Testis (tissue), 5 donors: ENCODE measurements at regions of chr20 and their contacts with region 1.

Region 1: DNA sequence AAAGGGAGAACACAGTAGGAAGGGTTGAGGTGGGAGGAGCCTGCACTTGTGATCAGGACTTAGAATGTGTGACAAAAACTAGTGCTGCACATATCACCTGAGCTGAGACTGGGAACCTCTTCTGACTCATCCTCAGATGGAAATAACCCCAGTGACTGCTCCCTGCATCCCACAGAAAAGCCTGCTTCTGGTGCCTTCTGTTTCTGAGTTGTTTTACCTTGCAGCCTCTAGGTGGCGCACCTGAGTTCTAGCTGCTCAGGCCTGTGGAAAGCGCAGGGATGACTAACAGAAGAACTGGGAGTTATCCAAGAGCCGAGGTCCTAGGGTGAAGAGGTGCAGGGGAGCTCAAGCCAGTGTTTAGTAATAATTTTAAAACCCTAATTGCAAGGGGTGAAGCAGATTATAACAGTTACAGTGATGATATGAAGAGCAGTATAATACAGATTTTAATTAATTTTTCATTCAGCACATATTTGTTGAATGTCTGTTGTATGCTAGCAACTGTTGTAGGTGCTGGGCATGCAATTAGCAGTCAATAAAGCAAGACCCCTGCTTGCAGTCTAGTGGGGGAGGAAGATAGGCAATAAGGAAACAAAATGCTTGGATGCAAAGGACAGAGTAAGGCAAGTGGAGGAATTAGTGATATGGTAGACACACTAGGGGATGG is 302.5 kb downstream of the DHX35 start:
- DNase-seq: peak; percentile 75
- H3K4me3 ChIP-seq: no peak overlapping the region
- H3K27ac ChIP-seq: no peak overlapping the region
- H3K4me1 ChIP-seq: no peaks in the 10 kb centered on the region
- H3K27me3 ChIP-seq: no peaks in the 10 kb centered on the region
- CTCF ChIP-seq: peak; percentile 66 to 90 (median 78)
- POLR2A ChIP-seq: no peak

Region 2: DNA sequence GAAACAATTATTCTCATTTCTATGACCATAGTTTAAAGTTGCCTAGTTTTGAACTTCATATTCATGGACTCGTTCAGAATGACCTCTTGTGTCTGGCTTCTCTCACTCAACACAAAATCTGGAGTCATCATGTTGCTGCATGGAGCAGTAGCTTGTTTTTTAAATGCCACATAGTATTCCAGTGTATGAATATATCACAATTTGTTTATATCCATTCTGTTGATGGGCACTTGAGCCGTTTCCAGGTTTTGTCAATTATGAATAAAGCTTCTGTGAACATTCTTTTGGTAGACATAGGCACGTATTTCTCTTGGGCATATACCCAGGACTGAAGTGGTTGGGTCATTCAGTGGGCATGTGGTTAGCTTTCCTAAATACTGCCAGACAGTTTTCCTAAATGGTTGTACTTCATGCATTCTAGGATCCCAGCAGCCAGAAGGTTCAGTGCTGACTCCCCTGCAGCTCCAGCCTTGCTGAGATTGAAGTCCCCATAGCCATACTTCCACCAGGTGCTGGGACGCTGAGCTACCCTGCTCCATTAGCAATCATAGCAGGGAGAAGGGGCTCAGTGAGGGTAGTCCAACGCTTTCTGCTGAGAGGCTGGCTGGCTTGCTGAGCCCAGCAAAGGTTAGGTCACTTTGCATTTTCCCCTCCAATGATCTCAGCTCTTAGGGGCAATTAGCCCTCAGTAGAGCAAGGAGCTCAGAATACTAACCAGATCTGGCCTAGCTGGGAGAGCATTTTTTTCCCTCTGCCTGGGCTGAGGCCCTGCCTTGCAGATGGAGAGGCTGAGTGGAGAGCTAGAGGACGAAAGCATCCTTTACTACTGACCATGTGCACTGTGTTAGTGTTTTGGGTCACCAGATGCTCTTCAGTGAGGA is 1606.5 kb before region 1 on chr20:
- intact Hi-C with region 1: no loop called
- DNase-seq: no peak
- H3K4me3 ChIP-seq: no peak overlapping the region
- H3K27ac ChIP-seq: no peak overlapping the region
- H3K4me1 ChIP-seq: no peaks in the 10 kb centered on the region
- H3K27me3 ChIP-seq: no peaks in the 10 kb centered on the region
- CTCF ChIP-seq: no peak
- POLR2A ChIP-seq: no peak

Region 3: DNA sequence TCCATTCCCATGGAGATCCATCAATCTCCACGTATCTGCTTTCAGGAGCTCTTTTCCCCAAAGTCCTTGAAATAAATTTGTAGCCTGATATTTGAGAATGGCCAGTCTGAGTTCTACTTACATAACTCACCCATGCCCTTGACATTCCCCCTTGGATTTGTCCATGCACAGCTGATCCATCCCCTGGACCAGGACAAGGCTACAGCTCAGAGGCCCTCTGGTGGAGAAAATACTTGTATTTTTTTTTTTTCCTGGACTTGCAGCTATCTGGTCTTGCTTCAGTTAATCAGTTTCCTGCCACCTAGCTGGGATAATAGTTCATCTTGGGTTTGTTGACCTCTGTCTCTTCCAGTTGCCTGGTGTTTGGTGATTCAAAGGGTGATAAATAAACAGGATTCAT is 165.1 kb after region 1 on chr20:
- intact Hi-C with region 1: loop called (anchors 10 kb)
- DNase-seq: peak; percentile 20
- H3K4me3 ChIP-seq: no peak overlapping the region
- H3K27ac ChIP-seq: no peak overlapping the region
- H3K4me1 ChIP-seq: no peaks in the 10 kb centered on the region
- H3K27me3 ChIP-seq: no peaks in the 10 kb centered on the region
- CTCF ChIP-seq: peak; percentile 8 to 39 (median 17)
- POLR2A ChIP-seq: no peak

Region 4: DNA sequence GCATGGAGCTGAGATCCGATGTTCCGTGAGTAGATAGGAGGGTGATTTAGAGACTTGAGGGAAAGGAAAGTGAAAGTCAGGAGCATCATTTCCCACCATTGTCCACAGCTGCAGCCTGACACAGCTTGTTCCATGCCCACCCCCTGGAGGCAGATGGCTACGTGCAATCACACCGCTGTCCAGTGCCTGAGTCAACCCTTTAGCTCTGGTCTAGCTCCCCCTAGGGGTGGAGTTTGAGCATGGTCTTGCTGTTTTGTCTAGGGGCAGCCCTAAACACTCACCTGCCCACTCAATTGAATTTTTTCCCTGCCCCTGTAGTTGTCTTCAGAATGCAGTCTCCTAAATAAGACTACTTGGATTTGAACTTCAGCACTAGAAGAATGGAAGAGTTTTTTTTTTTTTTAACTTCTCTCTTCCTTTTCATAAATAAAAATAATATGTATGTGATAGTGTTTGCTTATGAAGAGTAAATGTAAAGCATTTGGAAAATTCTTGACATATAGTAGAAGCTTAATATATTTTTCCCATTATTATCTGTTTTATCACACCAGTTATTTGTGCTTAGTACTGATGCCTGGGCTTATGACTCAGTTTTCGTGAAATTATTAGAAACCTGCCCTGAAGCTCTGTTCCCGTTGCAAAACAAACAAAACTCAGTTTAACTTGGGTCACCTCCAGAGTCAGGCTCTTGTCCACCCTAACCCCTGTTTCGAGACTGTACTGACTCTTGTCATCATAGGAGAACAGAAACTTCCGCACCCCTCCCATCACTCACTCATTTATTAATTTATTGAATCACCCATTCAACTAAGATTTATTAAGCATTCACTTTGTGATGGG is 609.6 kb after region 1 on chr20:
- intact Hi-C with region 1: loop called (anchors 10 kb)
- DNase-seq: peak; percentile 90
- H3K4me3 ChIP-seq: no peak overlapping the region
- H3K27ac ChIP-seq: no peak overlapping the region
- H3K4me1 ChIP-seq: no peaks in the 10 kb centered on the region
- H3K27me3 ChIP-seq: no peaks in the 10 kb centered on the region
- CTCF ChIP-seq: peak; percentile 70 to 86 (median 82)
- POLR2A ChIP-seq: no peak